Activated B cell treated with CpG ODN at 0.5 μM for 24 hours (primary cell): ENCODE measurements at regions of chr7 and their contacts with region 1.

Region 1: GRCh38 chr7:43647673-43648472 is 65.0 kb downstream of the STK17A start:
- DNase-seq: no peak
- ATAC-seq: peak; percentile 4
- H3K4me3 Mint-ChIP-seq: peak overlapping the region; percentile 72
- H3K27ac Mint-ChIP-seq: peak overlapping the region; percentile 90
- H3K4me1 Mint-ChIP-seq: peaks cover 96% of the 10 kb centered on the region
- H3K27me3 Mint-ChIP-seq: no peaks in the 10 kb centered on the region
- CTCF ChIP-seq: no peak

Region 2: GRCh38 chr7:41881331-41882130 is 1766.3 kb before region 1 on chr7:
- CTCF ChIA-PET with region 1: no interaction called
- POLR2A ChIA-PET with region 1: interaction called, 4 read pairs
- intact Hi-C with region 1: loop called (anchors 5 kb)
- DNase-seq: peak; percentile 75
- ATAC-seq: peak; percentile 88
- H3K4me3 Mint-ChIP-seq: peak overlapping the region; percentile 80
- H3K27ac Mint-ChIP-seq: peak overlapping the region; percentile 91
- H3K4me1 Mint-ChIP-seq: peaks cover 76% of the 10 kb centered on the region
- H3K27me3 Mint-ChIP-seq: no peaks in the 10 kb centered on the region
- CTCF ChIP-seq: no peak

Region 3: DNA sequence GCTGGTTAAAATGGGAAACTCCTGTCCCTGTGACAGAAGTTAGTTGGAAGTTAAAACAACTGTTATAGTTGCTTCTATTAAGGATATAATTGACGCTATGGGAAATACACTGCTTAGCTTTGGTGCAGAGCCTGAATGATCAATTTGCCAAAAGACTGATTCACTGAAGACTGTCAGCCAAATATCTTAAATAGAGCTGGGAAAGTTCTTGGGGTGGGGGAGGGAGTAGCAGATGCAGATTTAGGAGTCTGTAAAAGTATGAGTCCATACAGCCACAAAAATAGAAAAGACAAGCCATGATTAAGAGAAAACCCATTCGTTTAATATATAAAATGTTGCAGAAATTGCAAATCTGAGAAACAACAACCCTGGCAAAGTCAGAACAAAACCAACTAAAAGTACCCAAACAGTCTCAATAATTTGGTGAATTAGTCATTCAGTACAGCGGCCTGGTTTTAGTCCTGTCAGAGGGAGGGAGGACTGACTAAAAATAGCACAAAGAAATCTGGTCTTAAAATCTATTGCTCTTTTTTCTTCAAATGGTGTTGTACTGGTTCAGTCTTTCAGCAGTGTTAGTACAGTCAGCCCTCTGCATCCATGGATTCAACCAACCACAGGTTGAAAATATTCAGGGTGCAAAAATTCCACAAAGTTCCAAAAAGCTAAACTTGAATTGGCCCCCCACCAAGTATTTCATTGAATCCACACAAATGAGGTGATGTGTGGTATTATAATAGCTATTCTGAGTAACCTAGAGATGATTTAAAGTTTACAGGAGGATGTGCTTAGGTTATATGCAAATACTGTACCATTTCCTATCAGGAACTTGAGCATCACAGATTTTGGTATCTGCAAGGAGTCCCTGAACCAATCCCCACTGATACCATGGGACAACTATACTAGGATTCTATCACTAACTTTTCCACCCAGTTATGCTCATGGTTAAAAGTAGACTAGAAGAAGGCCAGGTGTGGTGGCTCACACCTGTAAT is 35.0 kb before region 1 on chr7:
- CTCF ChIA-PET with region 1: no interaction called
- POLR2A ChIA-PET with region 1: interaction called, 6 read pairs
- intact Hi-C with region 1: loop called (anchors 5 kb)
- DNase-seq: no peak
- ATAC-seq: peak; percentile 58
- H3K4me3 Mint-ChIP-seq: peak overlapping the region; percentile 49
- H3K27ac Mint-ChIP-seq: peak overlapping the region; percentile 86
- H3K4me1 Mint-ChIP-seq: peaks cover 60% of the 10 kb centered on the region
- H3K27me3 Mint-ChIP-seq: no peaks in the 10 kb centered on the region
- CTCF ChIP-seq: no peak

Region 4: GRCh38 chr7:43631559-43631958 is 16.3 kb before region 1 on chr7:
- CTCF ChIA-PET with region 1: interaction called, 3 read pairs
- POLR2A ChIA-PET with region 1: interaction called, 27 read pairs
- intact Hi-C with region 1: loop called (anchors 1 kb)
- DNase-seq: no peak
- ATAC-seq: no peak
- H3K4me3 Mint-ChIP-seq: no peak overlapping the region
- H3K27ac Mint-ChIP-seq: peak overlapping the region; percentile 70
- H3K4me1 Mint-ChIP-seq: peaks cover 75% of the 10 kb centered on the region
- H3K27me3 Mint-ChIP-seq: no peaks in the 10 kb centered on the region
- CTCF ChIP-seq: no peak

Region 5: DNA sequence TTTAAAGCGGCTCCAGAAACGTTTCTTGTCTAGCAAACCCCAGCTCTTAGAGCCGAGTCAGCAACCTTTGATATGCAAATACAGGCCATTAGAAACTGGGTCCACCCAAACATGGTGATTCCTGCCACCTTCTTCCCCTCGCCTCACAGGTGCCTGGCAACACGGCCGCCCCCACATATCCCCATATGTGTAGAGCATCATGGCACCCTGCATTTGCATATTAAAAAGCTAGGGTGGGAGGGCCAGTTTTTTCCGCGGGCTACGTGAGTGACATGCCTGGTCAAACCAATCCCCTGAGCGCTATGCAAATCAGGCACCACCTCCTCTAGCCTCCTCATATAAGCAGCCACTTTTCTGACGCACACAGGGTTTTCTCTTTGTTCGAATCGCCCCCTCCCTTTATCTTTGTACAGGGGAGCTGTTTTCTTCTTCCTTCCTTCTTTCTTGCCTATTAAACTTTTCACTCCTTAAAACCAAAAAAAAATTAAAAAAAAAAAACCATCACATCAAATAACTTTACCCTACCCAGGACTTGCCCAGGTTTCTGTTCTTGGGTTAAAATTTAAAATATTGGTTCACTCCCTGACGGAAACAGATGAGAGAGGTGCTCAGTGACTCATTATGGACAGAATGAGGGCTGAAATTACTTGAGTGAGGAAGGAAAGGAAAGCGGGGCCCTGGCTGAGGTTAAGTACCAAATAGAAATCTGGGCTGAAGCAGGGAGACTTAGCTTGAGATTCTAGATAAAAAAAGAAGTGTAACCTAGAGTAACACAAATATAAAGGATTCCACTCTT is 21.6 kb after region 1 on chr7:
- CTCF ChIA-PET with region 1: no interaction called
- POLR2A ChIA-PET with region 1: interaction called, 17 read pairs
- intact Hi-C with region 1: loop called (anchors 1 kb)
- DNase-seq: no peak
- ATAC-seq: peak; percentile 73
- H3K4me3 Mint-ChIP-seq: peak overlapping the region; percentile 57
- H3K27ac Mint-ChIP-seq: peak overlapping the region; percentile 72
- H3K4me1 Mint-ChIP-seq: peaks cover 72% of the 10 kb centered on the region
- H3K27me3 Mint-ChIP-seq: no peaks in the 10 kb centered on the region
- CTCF ChIP-seq: no peak

Region 6: DNA sequence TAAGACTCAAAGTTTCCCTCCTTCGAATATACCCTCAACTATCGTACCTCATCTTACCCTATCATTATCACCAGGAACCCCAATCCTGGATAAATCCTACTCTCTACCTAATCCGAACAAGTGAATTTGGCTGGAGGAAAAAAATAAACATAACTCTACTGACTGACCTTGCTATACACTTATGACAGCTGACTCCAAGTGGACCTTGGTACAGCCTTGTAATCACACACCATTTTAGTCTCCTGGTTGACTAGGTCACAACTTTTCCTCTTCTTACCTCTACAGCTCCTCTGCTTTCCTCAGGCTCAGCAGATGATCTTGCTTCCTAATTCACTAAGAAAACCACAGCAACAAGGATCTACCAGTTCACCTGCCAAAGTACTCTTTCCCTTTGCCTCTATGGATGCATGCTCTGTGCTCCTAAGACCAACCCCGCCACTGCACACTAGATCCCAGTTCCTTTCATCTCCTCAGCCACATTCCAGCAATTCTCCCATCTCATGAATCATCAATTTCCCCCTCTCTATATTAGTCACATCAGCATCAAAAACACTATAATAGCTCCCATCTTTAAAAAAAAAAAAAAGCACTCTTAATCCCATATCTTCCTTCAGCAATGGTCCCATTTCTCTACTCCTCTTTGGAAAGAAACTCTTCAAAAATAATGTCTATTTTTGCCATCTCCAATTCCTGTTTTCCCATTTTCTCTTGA is 46.0 kb after region 1 on chr7:
- CTCF ChIA-PET with region 1: interaction called, 55 read pairs
- POLR2A ChIA-PET with region 1: interaction called, 57 read pairs
- intact Hi-C with region 1: no loop called
- DNase-seq: no peak
- ATAC-seq: no peak
- H3K4me3 Mint-ChIP-seq: no peak overlapping the region
- H3K27ac Mint-ChIP-seq: no peak overlapping the region
- H3K4me1 Mint-ChIP-seq: peaks cover 41% of the 10 kb centered on the region
- H3K27me3 Mint-ChIP-seq: no peaks in the 10 kb centered on the region
- CTCF ChIP-seq: no peak

Region 7: DNA sequence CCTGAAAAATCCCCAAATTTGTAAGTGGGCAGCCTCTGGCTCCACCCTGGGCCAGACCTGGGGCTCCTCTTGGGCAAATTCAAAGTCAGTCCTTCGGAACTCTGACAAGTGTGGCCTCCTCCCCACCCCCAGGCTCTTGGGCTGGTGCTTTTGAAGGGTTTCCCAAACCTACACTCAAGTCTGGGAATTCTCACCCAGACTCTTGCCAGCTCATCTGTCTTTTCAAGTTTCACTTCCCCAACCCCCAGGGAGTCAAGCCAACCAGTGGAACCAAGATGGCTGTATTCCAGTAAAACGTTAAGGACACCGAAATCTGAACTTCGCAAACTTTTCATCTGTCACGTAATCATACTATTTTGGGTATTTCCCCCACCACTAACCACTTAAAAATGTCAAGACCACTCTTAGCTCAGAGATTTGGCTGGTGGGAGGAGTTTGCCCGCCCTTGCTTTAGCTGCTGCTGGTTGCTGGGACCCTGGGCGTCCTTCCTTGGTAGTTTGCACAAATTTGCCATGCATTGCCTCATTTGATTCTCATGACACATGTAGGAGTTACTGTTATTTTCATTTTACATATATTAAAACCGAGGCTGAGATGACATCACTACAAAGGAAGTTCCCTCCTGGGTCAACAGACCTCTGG is 1332.6 kb after region 1 on chr7:
- CTCF ChIA-PET with region 1: no interaction called
- POLR2A ChIA-PET with region 1: interaction called, 10 read pairs
- intact Hi-C with region 1: no loop called
- DNase-seq: peak; percentile 56
- ATAC-seq: peak; percentile 63
- H3K4me3 Mint-ChIP-seq: peak overlapping the region; percentile 74
- H3K27ac Mint-ChIP-seq: peak overlapping the region; percentile 92
- H3K4me1 Mint-ChIP-seq: peaks cover 86% of the 10 kb centered on the region
- H3K27me3 Mint-ChIP-seq: no peaks in the 10 kb centered on the region
- CTCF ChIP-seq: no peak